ENCODE measurements at regions of chr9 and their contacts with region 1.

Region 1: DNA sequence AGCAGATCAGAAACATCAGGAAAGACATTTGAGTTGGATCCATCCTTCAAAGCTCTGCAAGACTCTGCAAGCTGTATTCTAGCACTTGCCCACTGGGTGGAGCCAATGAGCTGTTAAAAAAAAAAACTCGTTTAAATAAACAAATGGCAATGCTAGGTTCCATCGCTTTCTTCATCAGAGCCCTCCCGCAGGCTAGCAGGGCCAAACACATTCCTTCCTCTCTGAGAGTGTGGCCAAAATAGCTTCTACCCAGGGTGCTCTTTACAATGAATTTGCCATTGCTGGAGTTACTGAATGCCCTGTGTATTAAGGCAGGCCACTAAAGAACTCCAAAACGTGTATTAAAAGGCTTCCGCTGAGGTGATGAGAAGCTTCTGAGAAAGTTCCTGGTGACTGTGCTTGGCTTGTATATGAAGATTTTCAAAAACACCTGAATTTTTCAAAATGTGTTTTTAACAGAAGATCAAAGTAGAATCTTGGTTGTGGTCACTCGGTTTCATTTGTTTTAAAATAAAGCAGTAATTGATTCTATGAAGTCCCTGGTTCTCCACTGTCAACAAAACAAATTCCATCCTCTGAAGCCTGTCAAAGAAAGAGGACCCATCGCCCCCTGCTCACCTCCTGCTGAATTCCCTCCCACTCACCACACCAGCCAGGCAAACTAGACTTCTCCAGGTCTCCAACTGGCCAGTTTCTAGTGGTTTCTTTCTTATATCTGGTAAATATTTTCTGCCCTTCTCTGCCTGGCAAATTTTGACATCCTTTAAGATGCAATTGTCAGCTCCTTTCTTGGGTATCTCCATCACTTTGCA is 36.5 kb upstream of the EQTN start:
- DNase-seq: peak; percentile 26 to 54 (median 30)
- ATAC-seq: peak; percentile 57
- H3K4me3 ChIP-seq: no peak overlapping the region
- H3K27ac ChIP-seq: no peak overlapping the region
- H3K4me1 ChIP-seq: no peaks in the 10 kb centered on the region; a peak in 1 of 5 replicates
- H3K27me3 ChIP-seq: no peaks in the 10 kb centered on the region
- CTCF ChIP-seq: peak; percentile 21 to 54 (median 44); a peak in 4 of 6 replicates
- EP300 ChIP-seq: no peak
- POLR2A ChIP-seq: no peak
- RAD21 ChIP-seq: peak; percentile 50 to 61; a peak in 2 of 4 replicates

Region 2: GRCh38 chr9:27292659-27293405 is 40.6 kb before region 1 on chr9:
- CTCF ChIA-PET with region 1: no interaction called
- POLR2A ChIA-PET with region 1: no interaction called
- in situ Hi-C with region 1: no loop called
- intact Hi-C with region 1: no loop called
- DNase-seq: no peak
- ATAC-seq: no peak
- H3K4me3 ChIP-seq: no peak overlapping the region
- H3K27ac ChIP-seq: no peak overlapping the region
- H3K4me1 ChIP-seq: no peaks in the 10 kb centered on the region
- H3K27me3 ChIP-seq: no peaks in the 10 kb centered on the region
- CTCF ChIP-seq: no peak
- EP300 ChIP-seq: no peak
- POLR2A ChIP-seq: no peak
- RAD21 ChIP-seq: no peak

Region 3: GRCh38 chr9:27441741-27442070 is 108.3 kb after region 1 on chr9:
- CTCF ChIA-PET with region 1: no interaction called
- POLR2A ChIA-PET with region 1: no interaction called
- in situ Hi-C with region 1: no loop called
- intact Hi-C with region 1: loop called (anchors 10 kb)
- DNase-seq: no peak
- ATAC-seq: no peak
- H3K4me3 ChIP-seq: no peak overlapping the region
- H3K27ac ChIP-seq: no peak overlapping the region
- H3K4me1 ChIP-seq: peaks cover 6 to 16% of the 10 kb centered on the region in 2 experiments; a peak in 4 of 5 replicates
- H3K27me3 ChIP-seq: no peaks in the 10 kb centered on the region
- CTCF ChIP-seq: no peak
- EP300 ChIP-seq: no peak
- POLR2A ChIP-seq: no peak
- RAD21 ChIP-seq: no peak

Region 4: GRCh38 chr9:27529316-27530278 is 196.2 kb after region 1 on chr9 and contains the start of gene MOB3B:
- CTCF ChIA-PET with region 1: interaction called, 6 read pairs
- POLR2A ChIA-PET with region 1: interaction called, 3 read pairs
- in situ Hi-C with region 1: loop called (anchors 5 kb)
- intact Hi-C with region 1: no loop called
- DNase-seq: peak; percentile 46 to 72 (median 52)
- ATAC-seq: peak; percentile 84
- H3K4me3 ChIP-seq: peak within 1 kb of the TSS; percentile 60
- H3K27ac ChIP-seq: peak within 1 kb of the TSS; percentile 75
- H3K4me1 ChIP-seq: peaks cover 3 to 8% of the 10 kb centered on the region in 2 experiments; a peak in 4 of 5 replicates
- H3K27me3 ChIP-seq: no peaks in the 10 kb centered on the region
- CTCF ChIP-seq: peak; percentile 47 to 57 (median 55); a peak in 5 of 6 replicates
- EP300 ChIP-seq: no peak
- POLR2A ChIP-seq: no peak
- RAD21 ChIP-seq: peak; percentile 46 to 58
- polyA plus RNA-seq, gene MOB3B: 4.6 to 7.2 TPM

Region 5: DNA sequence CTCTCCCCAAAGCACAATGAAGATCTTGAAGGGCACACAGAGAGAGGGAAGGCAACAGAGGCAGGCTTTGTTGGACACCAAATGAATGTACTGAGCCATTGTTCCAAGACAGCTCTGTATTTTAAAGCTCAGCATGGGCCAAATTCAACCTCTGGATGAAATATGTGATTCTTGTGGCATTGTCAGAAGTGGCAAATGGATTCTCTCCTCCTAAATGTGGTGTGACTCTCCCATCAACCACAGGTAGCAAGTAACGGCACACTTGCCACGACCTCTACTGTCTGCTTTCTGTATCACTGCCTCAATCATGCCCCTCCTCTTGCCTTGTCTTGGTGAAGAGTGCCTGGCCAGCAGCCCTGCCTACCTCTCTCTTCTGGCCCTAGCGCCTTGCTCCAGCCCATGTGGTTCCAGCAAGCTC is 202.3 kb after region 1 on chr9:
- CTCF ChIA-PET with region 1: interaction called, 3 read pairs
- POLR2A ChIA-PET with region 1: interaction called, 3 read pairs
- in situ Hi-C with region 1: loop called (anchors 5 kb)
- intact Hi-C with region 1: loop called (anchors 2 kb)
- DNase-seq: peak in 3 of 4 experiments; percentile 8 to 51 (median 13)
- ATAC-seq: peak; percentile 91
- H3K4me3 ChIP-seq: no peak overlapping the region
- H3K27ac ChIP-seq: no peak overlapping the region
- H3K4me1 ChIP-seq: peaks cover 0 to 6% of the 10 kb centered on the region in 2 experiments; a peak in 3 of 5 replicates
- H3K27me3 ChIP-seq: no peaks in the 10 kb centered on the region
- CTCF ChIP-seq: peak; percentile 32 to 48 (median 44); a peak in 4 of 6 replicates
- EP300 ChIP-seq: no peak
- POLR2A ChIP-seq: no peak
- RAD21 ChIP-seq: peak in 1 of 2 experiments; percentile 45; a peak in 2 of 4 replicates

Region 6: DNA sequence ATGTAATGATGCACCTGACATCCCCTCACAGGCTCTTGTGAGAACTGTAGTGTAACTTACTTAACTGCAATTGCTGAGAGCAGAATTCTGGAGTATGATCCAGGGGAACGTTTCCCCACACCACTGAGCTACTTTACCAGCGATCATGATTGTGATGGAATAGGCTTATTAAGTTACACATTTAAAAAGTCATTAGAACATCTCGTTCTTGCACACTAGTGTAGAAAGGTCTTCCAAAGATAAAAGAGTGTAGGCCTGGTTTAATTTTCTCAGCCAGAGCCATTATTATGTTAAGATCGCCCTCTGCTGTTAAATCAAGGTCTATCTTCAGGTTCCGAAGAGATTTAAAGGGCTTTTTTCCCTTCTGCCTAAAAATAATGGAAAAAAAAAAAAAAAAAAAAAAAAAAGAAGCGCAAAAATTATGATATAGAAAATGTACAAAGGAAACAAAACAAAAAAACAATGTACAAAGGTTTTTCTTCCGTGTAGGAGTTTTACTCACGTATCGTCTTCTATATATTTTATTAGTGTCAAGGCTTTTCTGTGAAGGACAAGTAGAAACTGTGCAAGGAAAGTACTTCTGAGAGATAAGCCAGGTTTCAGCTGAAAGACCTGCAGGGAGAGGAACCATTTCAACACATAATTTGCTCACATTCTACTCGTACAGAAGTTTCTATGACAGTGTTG is 214.8 kb after region 1 on chr9:
- CTCF ChIA-PET with region 1: interaction called, 27 read pairs
- POLR2A ChIA-PET with region 1: no interaction called
- in situ Hi-C with region 1: no loop called
- intact Hi-C with region 1: loop called (anchors 2 kb)
- DNase-seq: peak in 1 of 4 experiments; percentile 9
- ATAC-seq: peak; percentile 56; the same call in 1 of the 3 replicates
- H3K4me3 ChIP-seq: no peak overlapping the region
- H3K27ac ChIP-seq: no peak overlapping the region
- H3K4me1 ChIP-seq: no peaks in the 10 kb centered on the region
- H3K27me3 ChIP-seq: no peaks in the 10 kb centered on the region
- CTCF ChIP-seq: peak; percentile 13 to 51 (median 13); a peak in 3 of 6 replicates
- EP300 ChIP-seq: no peak
- POLR2A ChIP-seq: no peak
- RAD21 ChIP-seq: peak; percentile 23 to 64; a peak in 3 of 4 replicates

Region 7: GRCh38 chr9:28317745-28318144 is 984.3 kb after region 1 on chr9:
- CTCF ChIA-PET with region 1: no interaction called
- POLR2A ChIA-PET with region 1: no interaction called
- in situ Hi-C with region 1: no loop called
- intact Hi-C with region 1: no loop called
- DNase-seq: no peak
- ATAC-seq: no peak
- H3K4me3 ChIP-seq: no peak overlapping the region
- H3K27ac ChIP-seq: no peak overlapping the region
- H3K4me1 ChIP-seq: no peaks in the 10 kb centered on the region
- H3K27me3 ChIP-seq: no peaks in the 10 kb centered on the region
- CTCF ChIP-seq: no peak
- EP300 ChIP-seq: no peak
- POLR2A ChIP-seq: no peak
- RAD21 ChIP-seq: no peak

Measured in K562 (cell line).